ENCODE measurements at regions of chr19 and their contacts with region 1.

Region 1: GRCh38 chr19:35468637-35469036 is 20.6 kb downstream of the FFAR2 start:
- DNase-seq: peak; percentile 77
- ATAC-seq: peak; percentile 96
- H3K4me3 Mint-ChIP-seq: no peak overlapping the region
- H3K27ac Mint-ChIP-seq: no peak overlapping the region
- H3K4me1 Mint-ChIP-seq: peaks cover 7% of the 10 kb centered on the region
- H3K27me3 Mint-ChIP-seq: no peaks in the 10 kb centered on the region
- CTCF ChIP-seq: peak; percentile 73

Region 2: DNA sequence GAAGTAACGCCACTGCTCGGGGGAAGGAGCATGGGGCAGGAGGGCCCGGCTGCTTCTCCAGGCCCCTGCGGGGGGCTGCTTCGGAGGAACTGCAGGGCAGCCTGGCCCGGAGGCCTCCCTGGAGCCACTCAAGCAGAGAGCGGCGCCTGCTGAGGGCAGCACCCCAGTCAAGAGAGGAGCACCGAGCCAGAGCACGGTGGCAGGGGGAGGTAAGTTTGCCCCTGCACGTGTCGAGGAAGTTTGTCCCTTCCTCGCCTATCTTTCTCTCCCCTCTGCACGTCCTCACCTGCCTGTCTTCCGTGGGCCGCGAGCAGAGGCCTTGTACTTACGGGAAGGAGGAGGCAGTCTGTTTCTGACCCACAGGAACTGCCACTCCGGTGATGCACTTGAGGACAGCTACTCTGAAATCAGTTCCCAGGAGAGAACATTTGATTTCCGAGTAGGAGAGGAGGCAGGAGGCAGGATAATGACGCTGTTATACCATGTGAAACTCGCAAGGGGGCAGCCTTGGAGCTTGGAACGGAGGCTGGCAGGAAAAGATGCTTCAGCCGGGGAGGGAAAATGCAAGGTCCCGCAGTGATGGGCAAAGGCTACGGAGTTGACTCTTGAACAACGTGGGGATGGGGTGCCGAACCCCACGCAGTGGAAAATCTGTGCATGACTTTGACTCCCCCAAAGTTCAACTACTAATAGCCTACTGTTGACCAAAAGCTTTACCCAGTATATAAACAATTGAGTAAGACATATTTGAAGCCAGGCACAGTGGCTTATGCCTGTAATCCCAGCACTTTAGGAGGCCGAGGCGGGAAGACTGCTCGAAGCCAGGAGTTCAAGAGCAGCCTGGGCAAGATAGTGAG is 116.0 kb before region 1 on chr19:
- CTCF ChIA-PET with region 1: interaction called, 42 read pairs
- POLR2A ChIA-PET with region 1: interaction called, 3 read pairs
- intact Hi-C with region 1: loop called (anchors 1 kb)
- DNase-seq: peak; percentile 82
- ATAC-seq: peak; percentile 87
- H3K4me3 Mint-ChIP-seq: no peak overlapping the region
- H3K27ac Mint-ChIP-seq: no peak overlapping the region
- H3K4me1 Mint-ChIP-seq: peaks cover 16% of the 10 kb centered on the region
- H3K27me3 Mint-ChIP-seq: peaks cover 2% of the 10 kb centered on the region
- CTCF ChIP-seq: peak; percentile 95

Region 3: DNA sequence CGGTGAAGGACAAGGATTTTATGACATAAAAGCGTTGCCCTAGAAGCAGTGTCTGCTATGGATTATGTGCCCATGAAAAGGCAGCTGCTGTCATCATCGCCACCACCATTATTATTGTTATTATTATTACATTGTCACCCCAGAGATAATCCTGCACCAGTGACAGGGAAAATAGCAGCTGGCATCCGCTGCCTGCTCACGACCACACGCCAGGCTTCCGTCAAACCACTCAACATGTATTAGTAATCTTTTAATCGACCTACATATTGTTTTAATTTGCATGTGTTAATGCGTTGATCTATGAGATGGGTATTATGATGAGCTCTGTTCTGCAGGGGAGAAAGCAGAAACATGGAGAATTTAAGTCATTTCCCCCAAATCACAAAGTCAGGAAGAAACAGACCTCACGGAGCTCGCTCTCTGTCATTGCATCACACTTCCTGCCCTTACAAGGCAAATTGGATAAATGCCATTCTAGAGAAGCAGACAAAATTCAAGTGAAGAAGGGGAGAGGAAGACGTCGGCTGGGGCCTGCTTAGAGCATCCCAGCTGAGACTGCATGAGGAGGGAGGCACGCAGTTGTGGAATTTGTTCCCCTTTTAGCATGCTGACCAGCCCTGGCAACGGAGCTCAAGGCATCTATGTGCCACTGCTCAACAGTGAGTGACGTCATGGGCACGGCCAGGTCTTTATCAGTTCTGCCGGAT is 110.6 kb before region 1 on chr19 and contains the start of gene FFAR3:
- CTCF ChIA-PET with region 1: interaction called, 42 read pairs
- POLR2A ChIA-PET with region 1: interaction called, 3 read pairs
- intact Hi-C with region 1: loop called (anchors 1 kb)
- DNase-seq: peak; percentile 32
- ATAC-seq: peak; percentile 38
- H3K4me3 Mint-ChIP-seq: peak within 1 kb of the TSS; percentile 49
- H3K27ac Mint-ChIP-seq: peak within 1 kb of the TSS; percentile 65
- H3K4me1 Mint-ChIP-seq: peaks cover 9% of the 10 kb centered on the region
- H3K27me3 Mint-ChIP-seq: peaks cover 7% of the 10 kb centered on the region
- CTCF ChIP-seq: no peak
- total RNA-seq, gene FFAR3: 1.1 to 1.2 TPM

Region 4: DNA sequence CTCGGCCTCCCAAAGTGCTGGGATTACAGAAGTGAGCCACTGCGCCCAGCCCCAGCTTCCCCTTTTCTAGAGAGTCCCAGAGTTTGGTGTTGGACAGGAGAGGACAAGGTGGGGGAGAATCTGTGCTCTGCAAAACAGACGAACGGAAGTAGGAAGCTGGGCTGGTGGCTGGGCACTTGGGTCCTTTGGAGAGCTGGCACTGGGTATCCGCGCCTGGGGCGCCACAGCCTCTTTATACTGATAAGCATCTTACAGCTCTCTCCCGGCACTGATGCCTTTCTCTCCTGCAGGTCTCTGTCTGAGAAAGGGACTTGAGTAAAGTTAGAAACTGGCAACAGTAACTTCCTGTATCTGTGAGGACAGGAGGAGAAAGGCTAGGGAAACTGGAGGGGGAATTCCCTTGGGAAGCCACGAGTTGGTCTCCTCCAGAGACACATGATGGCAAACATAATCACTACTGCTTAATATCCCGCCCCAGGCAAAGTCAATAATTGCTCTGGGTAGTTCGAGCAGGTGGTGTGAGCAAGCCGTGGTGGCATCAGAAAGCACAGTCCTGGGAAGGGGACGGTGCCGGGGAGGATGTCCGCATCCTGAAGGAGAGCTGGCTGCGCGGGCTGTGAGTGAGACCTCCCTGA is 19.5 kb before region 1 on chr19:
- CTCF ChIA-PET with region 1: interaction called, 11 read pairs
- POLR2A ChIA-PET with region 1: interaction called, 3 read pairs
- intact Hi-C with region 1: no loop called
- DNase-seq: peak; percentile 15
- ATAC-seq: no peak
- H3K4me3 Mint-ChIP-seq: no peak overlapping the region
- H3K27ac Mint-ChIP-seq: no peak overlapping the region
- H3K4me1 Mint-ChIP-seq: peaks cover 46% of the 10 kb centered on the region
- H3K27me3 Mint-ChIP-seq: peaks cover 19% of the 10 kb centered on the region
- CTCF ChIP-seq: no peak

Measured in activated CD8-positive, alpha-beta T cell treated with anti-CD3 and anti-CD28 coated beads for 36 hours (primary cell).